CD4-positive, alpha-beta memory T cell (primary cell): ENCODE measurements at regions of chr4 and their contacts with region 1.

Region 1: GRCh38 chr4:2281575-2282343 is 19.9 kb upstream of the MXD4 start:
- DNase-seq: peak; percentile 88 to 98 (median 92)
- H3K4me3 ChIP-seq: peak overlapping the region in 1 of 2 donors; percentile 47
- H3K4me3 Mint-ChIP-seq: peak overlapping the region; percentile 46 to 88 (median 74)
- H3K27ac ChIP-seq: peak overlapping the region; percentile 80
- H3K27ac Mint-ChIP-seq: peak overlapping the region; percentile 92 to 100 (median 99)
- H3K4me1 ChIP-seq: peaks cover 44% of the 10 kb centered on the region
- H3K4me1 Mint-ChIP-seq: peaks cover 25 to 51% (median 31%) of the 10 kb centered on the region in 4 donors
- H3K27me3 ChIP-seq: no peaks in the 10 kb centered on the region
- H3K27me3 Mint-ChIP-seq: no peaks in the 10 kb centered on the region

Region 2: GRCh38 chr4:2262143-2262943 is 19.4 kb before region 1 on chr4:
- CTCF ChIA-PET with region 1: interaction called, 4 read pairs
- POLR2A ChIA-PET with region 1: interaction called, 38 read pairs
- intact Hi-C with region 1: loop called (anchors 1 kb)
- DNase-seq: peak; percentile 98 to 99 (median 99)
- H3K4me3 ChIP-seq: peak overlapping the region in 1 of 2 donors; percentile 70
- H3K4me3 Mint-ChIP-seq: peak overlapping the region; percentile 65 to 93 (median 82)
- H3K27ac ChIP-seq: peak overlapping the region; percentile 89
- H3K27ac Mint-ChIP-seq: peak overlapping the region; percentile 59 to 92 (median 88)
- H3K4me1 ChIP-seq: peaks cover 46% of the 10 kb centered on the region
- H3K4me1 Mint-ChIP-seq: peaks cover 2 to 24% (median 5%) of the 10 kb centered on the region in 4 donors
- H3K27me3 ChIP-seq: no peaks in the 10 kb centered on the region
- H3K27me3 Mint-ChIP-seq: no peaks in the 10 kb centered on the region

Region 3: GRCh38 chr4:2318476-2318875 is 36.7 kb after region 1 on chr4:
- CTCF ChIA-PET with region 1: no interaction called
- POLR2A ChIA-PET with region 1: no interaction called
- intact Hi-C with region 1: no loop called
- DNase-seq: no peak
- H3K4me3 ChIP-seq: no peak overlapping the region
- H3K4me3 Mint-ChIP-seq: no peak overlapping the region
- H3K27ac ChIP-seq: no peak overlapping the region
- H3K27ac Mint-ChIP-seq: no peak overlapping the region
- H3K4me1 ChIP-seq: no peaks in the 10 kb centered on the region
- H3K4me1 Mint-ChIP-seq: peaks cover 2 to 9% (median 5%) of the 10 kb centered on the region in 4 donors
- H3K27me3 ChIP-seq: no peaks in the 10 kb centered on the region
- H3K27me3 Mint-ChIP-seq: no peaks in the 10 kb centered on the region

Region 4: GRCh38 chr4:2412885-2413716 is 131.3 kb after region 1 on chr4:
- CTCF ChIA-PET with region 1: interaction called, 13 read pairs
- POLR2A ChIA-PET with region 1: interaction called, 27 read pairs
- intact Hi-C with region 1: loop called (anchors 2 kb)
- DNase-seq: peak; percentile 96 to 99 (median 97)
- H3K4me3 ChIP-seq: peak overlapping the region; percentile 15 to 55
- H3K4me3 Mint-ChIP-seq: peak overlapping the region; percentile 79 to 90 (median 82)
- H3K27ac ChIP-seq: peak overlapping the region; percentile 86
- H3K27ac Mint-ChIP-seq: peak overlapping the region; percentile 92 to 99 (median 98)
- H3K4me1 ChIP-seq: peaks cover 81% of the 10 kb centered on the region
- H3K4me1 Mint-ChIP-seq: peaks cover 49 to 81% (median 64%) of the 10 kb centered on the region in 4 donors
- H3K27me3 ChIP-seq: no peaks in the 10 kb centered on the region
- H3K27me3 Mint-ChIP-seq: peaks cover 0 to 2% of the 10 kb centered on the region in 2 donors

Region 5: DNA sequence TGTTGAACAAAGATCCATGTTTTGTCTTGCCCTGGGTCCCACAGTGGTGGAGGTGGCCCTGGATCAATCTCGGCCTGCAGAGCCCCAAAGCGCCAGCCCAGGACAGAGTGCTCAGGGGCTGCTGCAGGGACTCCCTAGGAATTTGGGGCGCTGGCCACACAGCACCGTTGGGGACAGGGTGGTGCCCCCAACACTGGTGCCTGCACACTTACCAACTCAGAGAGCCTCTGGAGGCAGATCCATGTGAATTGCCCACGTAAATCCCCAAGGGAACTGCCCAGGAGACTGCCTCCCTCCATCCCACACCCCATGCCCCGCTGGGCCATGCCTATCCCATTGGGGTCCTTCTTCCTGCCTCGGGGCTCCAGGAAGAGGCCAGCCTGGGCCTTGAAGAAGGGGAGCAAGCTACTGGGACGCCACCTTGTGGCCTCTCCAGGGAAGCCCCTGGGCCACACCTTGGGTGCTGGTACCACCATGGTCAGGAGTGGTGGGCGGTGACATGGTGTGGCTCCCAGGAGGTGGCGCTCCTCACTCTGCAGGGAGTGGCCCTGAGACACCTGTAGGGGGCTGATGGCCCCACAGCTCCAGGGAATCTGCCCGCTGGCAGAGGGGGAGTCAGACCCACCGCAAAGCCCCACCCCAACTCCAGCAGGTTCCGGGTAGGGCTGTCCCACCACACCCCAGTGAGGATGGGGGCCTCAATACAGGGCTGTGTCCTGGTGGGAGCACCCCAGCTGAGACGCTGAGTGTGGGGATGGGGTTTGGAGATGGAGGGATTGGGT is 159.8 kb after region 1 on chr4:
- CTCF ChIA-PET with region 1: interaction called, 8 read pairs
- POLR2A ChIA-PET with region 1: interaction called, 3 read pairs
- intact Hi-C with region 1: loop called (anchors 1 kb)
- DNase-seq: peak; percentile 63 to 78 (median 69)
- H3K4me3 ChIP-seq: no peak overlapping the region
- H3K4me3 Mint-ChIP-seq: peak overlapping the region in 1 of 8 donors; percentile 43
- H3K27ac ChIP-seq: no peak overlapping the region
- H3K27ac Mint-ChIP-seq: peak overlapping the region in 1 of 7 donors; percentile 82
- H3K4me1 ChIP-seq: peaks cover 6% of the 10 kb centered on the region
- H3K4me1 Mint-ChIP-seq: peaks cover 0 to 5% (median 2%) of the 10 kb centered on the region in 4 donors
- H3K27me3 ChIP-seq: no peaks in the 10 kb centered on the region
- H3K27me3 Mint-ChIP-seq: no peaks in the 10 kb centered on the region

Region 6: GRCh38 chr4:2468445-2469192 is 186.9 kb after region 1 on chr4 and contains the start of gene RNF4:
- CTCF ChIA-PET with region 1: interaction called, 4 read pairs
- POLR2A ChIA-PET with region 1: interaction called, 11 read pairs
- intact Hi-C with region 1: no loop called
- DNase-seq: peak; percentile 94 to 98 (median 97)
- H3K4me3 ChIP-seq: peak within 1 kb of the TSS; percentile 67 to 84
- H3K4me3 Mint-ChIP-seq: peak within 1 kb of the TSS; percentile 95 to 98 (median 95)
- H3K27ac ChIP-seq: peak within 1 kb of the TSS; percentile 98
- H3K27ac Mint-ChIP-seq: peak within 1 kb of the TSS; percentile 96 to 99 (median 98)
- H3K4me1 ChIP-seq: peaks cover 52% of the 10 kb centered on the region
- H3K4me1 Mint-ChIP-seq: peaks cover 28 to 62% (median 41%) of the 10 kb centered on the region in 4 donors
- H3K27me3 ChIP-seq: no peaks in the 10 kb centered on the region
- H3K27me3 Mint-ChIP-seq: no peaks in the 10 kb centered on the region
- total RNA-seq, gene RNF4: 94.0 to 104 TPM